ENCODE measurements at regions of chr11 and their contacts with region 1.

Region 1: GRCh38 chr11:77547863-77548551 is 41.7 kb upstream of the AQP11 start:
- DNase-seq: peak; percentile 62 to 75
- H3K4me3 ChIP-seq: no peak overlapping the region
- H3K4me3 Mint-ChIP-seq: no peak overlapping the region
- H3K27ac Mint-ChIP-seq: no peak overlapping the region
- H3K4me1 ChIP-seq: peaks cover 3% of the 10 kb centered on the region; the same call in 1 of the 2 replicates
- H3K4me1 Mint-ChIP-seq: peaks cover 6% of the 10 kb centered on the region
- H3K27me3 ChIP-seq: no peaks in the 10 kb centered on the region
- H3K27me3 Mint-ChIP-seq: no peaks in the 10 kb centered on the region
- CTCF ChIP-seq: peak; percentile 73 to 74

Region 2: GRCh38 chr11:77198440-77198849 is 349.6 kb before region 1 on chr11:
- CTCF ChIA-PET with region 1: interaction called, 28 read pairs
- POLR2A ChIA-PET with region 1: no interaction called
- intact Hi-C with region 1: loop called (anchors 1 kb)
- DNase-seq: peak; percentile 68 to 70
- H3K4me3 ChIP-seq: no peak overlapping the region
- H3K4me3 Mint-ChIP-seq: no peak overlapping the region
- H3K27ac Mint-ChIP-seq: no peak overlapping the region
- H3K4me1 ChIP-seq: no peaks in the 10 kb centered on the region
- H3K4me1 Mint-ChIP-seq: no peaks in the 10 kb centered on the region
- H3K27me3 ChIP-seq: no peaks in the 10 kb centered on the region
- H3K27me3 Mint-ChIP-seq: no peaks in the 10 kb centered on the region
- CTCF ChIP-seq: peak; percentile 53 to 72

Region 3: GRCh38 chr11:77309401-77310085 is 238.5 kb before region 1 on chr11:
- CTCF ChIA-PET with region 1: interaction called, 3 read pairs
- POLR2A ChIA-PET with region 1: no interaction called
- intact Hi-C with region 1: loop called (anchors 10 kb)
- DNase-seq: no peak
- H3K4me3 ChIP-seq: no peak overlapping the region
- H3K4me3 Mint-ChIP-seq: no peak overlapping the region
- H3K27ac Mint-ChIP-seq: no peak overlapping the region
- H3K4me1 ChIP-seq: no peaks in the 10 kb centered on the region
- H3K4me1 Mint-ChIP-seq: no peaks in the 10 kb centered on the region
- H3K27me3 ChIP-seq: no peaks in the 10 kb centered on the region
- H3K27me3 Mint-ChIP-seq: peaks cover 4% of the 10 kb centered on the region
- CTCF ChIP-seq: no peak

Region 4: GRCh38 chr11:77411717-77412441 is 136.1 kb before region 1 on chr11:
- CTCF ChIA-PET with region 1: interaction called, 10 read pairs
- POLR2A ChIA-PET with region 1: no interaction called
- intact Hi-C with region 1: loop called (anchors 1 kb)
- DNase-seq: no peak
- H3K4me3 ChIP-seq: no peak overlapping the region
- H3K4me3 Mint-ChIP-seq: no peak overlapping the region
- H3K27ac Mint-ChIP-seq: no peak overlapping the region
- H3K4me1 ChIP-seq: no peaks in the 10 kb centered on the region
- H3K4me1 Mint-ChIP-seq: peaks cover 6% of the 10 kb centered on the region
- H3K27me3 ChIP-seq: no peaks in the 10 kb centered on the region
- H3K27me3 Mint-ChIP-seq: no peaks in the 10 kb centered on the region
- CTCF ChIP-seq: no peak

Region 5: GRCh38 chr11:77515483-77516090 is 32.4 kb before region 1 on chr11:
- CTCF ChIA-PET with region 1: no interaction called
- POLR2A ChIA-PET with region 1: no interaction called
- intact Hi-C with region 1: loop called (anchors 1 kb)
- DNase-seq: peak; percentile 83 to 85
- H3K4me3 ChIP-seq: no peak overlapping the region
- H3K4me3 Mint-ChIP-seq: peak overlapping the region; percentile 52
- H3K27ac Mint-ChIP-seq: peak overlapping the region; percentile 6
- H3K4me1 ChIP-seq: peaks cover 17% of the 10 kb centered on the region
- H3K4me1 Mint-ChIP-seq: peaks cover 22% of the 10 kb centered on the region
- H3K27me3 ChIP-seq: no peaks in the 10 kb centered on the region
- H3K27me3 Mint-ChIP-seq: no peaks in the 10 kb centered on the region
- CTCF ChIP-seq: no peak

Region 6: GRCh38 chr11:77559686-77560425 is 11.8 kb after region 1 on chr11:
- CTCF ChIA-PET with region 1: interaction called, 11 read pairs
- POLR2A ChIA-PET with region 1: no interaction called
- intact Hi-C with region 1: no loop called
- DNase-seq: no peak
- H3K4me3 ChIP-seq: no peak overlapping the region
- H3K4me3 Mint-ChIP-seq: no peak overlapping the region
- H3K27ac Mint-ChIP-seq: no peak overlapping the region
- H3K4me1 ChIP-seq: peaks cover 42% of the 10 kb centered on the region
- H3K4me1 Mint-ChIP-seq: peaks cover 27% of the 10 kb centered on the region
- H3K27me3 ChIP-seq: no peaks in the 10 kb centered on the region
- H3K27me3 Mint-ChIP-seq: no peaks in the 10 kb centered on the region
- CTCF ChIP-seq: no peak